Right ventricle myocardium inferior (tissue), 1 donor: ENCODE measurements at regions of chr16 and their contacts with region 1.

Region 1: DNA sequence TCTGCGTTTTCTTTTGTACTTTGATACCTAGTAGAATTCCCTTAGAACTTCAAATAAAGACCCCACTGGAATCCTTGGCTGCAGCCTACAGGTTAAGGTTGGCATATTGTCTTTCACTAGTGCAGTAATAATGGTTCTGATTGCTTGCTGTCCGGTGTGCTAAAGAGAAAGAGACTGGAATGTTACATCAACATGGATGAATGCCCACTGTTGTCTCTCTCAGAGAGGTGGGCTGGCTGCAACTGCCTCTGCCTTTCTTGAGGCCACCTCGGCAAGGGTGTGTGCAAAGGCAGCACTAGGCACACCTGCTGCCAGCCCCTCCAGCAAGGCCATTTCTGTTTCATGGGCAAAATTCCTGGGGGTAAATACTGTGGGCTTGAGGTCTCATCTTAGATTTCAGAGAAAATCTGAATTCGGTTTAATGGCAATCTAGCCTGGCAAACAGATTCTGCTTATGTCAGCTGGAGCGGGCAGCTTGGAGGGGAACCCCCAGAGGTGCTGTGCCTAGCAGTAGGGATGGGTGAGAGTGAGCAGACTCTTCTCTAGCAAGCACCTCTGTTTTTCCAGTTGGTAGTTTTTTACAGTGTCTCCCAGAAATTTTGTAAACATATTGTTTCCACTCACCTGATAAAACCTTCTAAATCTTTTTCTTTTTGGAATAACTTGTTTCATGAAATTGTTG is 54.0 kb downstream of the MRTFB start:
- DNase-seq: no peak
- ATAC-seq: no peak

Region 2: DNA sequence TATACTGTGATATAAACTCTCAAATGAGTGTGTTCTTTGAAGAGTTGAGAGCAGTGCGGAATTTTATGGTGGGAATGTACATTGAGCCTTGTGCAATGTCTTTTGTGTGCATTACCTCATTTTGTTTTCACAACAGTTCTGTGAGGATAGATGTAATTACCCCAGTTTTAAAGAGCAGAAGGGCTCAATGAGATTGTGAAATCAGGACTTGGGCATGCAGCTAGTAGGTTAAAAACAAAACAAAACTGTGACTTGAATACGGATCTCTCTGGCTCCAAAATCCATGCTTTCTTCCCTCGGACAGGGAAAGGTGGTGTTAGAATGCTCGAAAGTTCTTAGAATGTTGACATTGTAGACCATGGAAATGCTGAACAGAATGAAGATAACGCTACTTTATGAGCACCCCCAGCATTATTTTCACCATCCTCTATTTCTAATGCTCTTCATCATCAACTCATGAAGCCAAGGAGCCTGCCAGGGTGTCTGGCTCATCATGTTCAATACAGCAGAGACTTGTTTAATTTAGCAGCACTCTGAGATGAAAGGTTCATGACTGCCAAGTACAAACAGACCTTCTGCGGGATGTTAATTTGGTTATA is 36.9 kb before region 1 on chr16:
- intact Hi-C with region 1: loop called (anchors 5 kb)
- DNase-seq: no peak
- ATAC-seq: peak; percentile 75